ENCODE measurements at regions of chr1 and their contacts with region 1.

Region 1: DNA sequence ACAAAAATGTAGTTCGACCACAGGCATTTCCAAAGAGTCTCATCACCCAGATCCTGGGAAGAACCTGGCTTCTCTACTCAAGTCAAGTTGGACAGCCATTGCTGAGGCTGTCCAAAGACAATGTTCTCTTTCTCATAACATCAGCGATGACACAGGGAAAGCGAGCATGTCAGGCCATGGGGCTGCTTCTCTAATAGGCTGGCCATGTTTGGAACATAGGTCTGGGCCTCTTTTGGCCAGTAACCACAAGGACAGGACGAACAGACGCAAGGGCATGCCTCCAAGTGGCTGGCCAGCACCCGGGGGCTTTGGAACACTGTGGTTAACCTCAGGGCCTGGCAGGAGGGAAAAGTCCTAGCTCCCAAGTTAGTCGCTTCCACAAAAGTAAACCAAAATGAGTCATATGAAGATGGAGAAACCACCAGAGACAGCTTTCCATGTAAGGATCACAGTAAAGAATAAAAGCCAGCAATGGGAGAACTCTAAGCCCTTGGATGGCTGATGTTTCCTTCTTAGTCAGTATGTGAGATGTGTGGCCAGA is 80.6 kb upstream of the SLC44A3 start:
- DNase-seq: no peak
- H3K4me3 ChIP-seq: no peak overlapping the region
- H3K27ac ChIP-seq: peak overlapping the region in 1 of 4 donors; percentile 32
- H3K4me1 ChIP-seq: peaks cover 0 to 34% (median 33%) of the 10 kb centered on the region in 4 donors
- H3K27me3 ChIP-seq: no peaks in the 10 kb centered on the region
- CTCF ChIP-seq: no peak
- EP300 ChIP-seq: no peak
- POLR2A ChIP-seq: no peak

Region 2: DNA sequence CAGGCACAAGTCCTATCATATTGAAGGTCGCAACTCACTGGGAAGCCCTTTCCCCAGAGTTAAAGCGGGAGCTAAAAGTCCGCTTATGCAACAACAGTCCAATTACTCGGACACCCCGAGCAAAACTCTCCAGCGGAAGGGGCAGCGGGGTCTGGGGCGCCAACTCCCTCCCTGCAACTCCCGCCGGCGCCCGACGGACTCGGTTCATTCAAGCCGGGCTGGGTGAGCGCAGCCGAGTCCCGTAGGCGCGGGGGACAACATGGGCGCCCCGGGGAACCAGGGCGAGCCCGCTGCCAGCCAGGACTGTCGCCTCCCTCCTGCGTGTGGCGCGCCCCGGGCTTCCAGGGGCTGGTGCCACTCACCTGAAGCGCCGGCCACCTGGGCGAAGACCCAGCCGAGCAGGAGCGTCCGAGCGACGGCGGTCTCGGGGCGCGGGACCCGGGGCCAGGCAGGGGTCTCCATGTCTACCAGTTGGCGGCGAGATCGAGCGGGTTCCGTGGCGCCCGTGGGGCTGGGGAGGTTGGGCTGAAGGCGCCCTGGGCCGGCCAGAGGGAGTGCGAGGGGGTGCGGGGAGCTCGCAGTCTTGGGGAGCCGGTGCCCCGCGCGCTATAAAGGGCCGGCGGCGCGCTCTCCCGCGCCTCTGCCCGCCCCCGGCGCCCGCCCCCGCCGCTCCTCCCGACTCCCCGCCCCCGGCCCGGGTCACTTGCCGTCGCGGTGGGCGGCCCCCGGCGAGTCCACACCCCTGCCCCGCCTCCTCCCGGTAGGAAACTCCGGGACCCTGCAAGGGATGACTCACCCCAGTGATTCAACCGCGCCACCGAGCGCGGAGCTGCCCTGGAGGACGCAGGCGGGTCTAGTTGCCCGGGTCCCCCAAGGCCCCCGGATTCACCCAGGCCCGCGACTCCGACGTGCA is 198.2 kb before region 1 on chr1 and contains the start of gene F3:
- intact Hi-C with region 1: loop called (anchors 5 kb)
- DNase-seq: peak; percentile 96
- H3K4me3 ChIP-seq: peak within 1 kb of the TSS; percentile 73 to 80 (median 76)
- H3K27ac ChIP-seq: peak within 1 kb of the TSS; percentile 85 to 89 (median 88)
- H3K4me1 ChIP-seq: peaks cover 0 to 35% (median 13%) of the 10 kb centered on the region in 4 donors
- H3K27me3 ChIP-seq: no peaks in the 10 kb centered on the region
- CTCF ChIP-seq: no peak
- EP300 ChIP-seq: no peak
- POLR2A ChIP-seq: peak; percentile 90 to 91
- total RNA-seq, gene F3: 19.3 to 53.7 (median 19.3) TPM

Region 3: DNA sequence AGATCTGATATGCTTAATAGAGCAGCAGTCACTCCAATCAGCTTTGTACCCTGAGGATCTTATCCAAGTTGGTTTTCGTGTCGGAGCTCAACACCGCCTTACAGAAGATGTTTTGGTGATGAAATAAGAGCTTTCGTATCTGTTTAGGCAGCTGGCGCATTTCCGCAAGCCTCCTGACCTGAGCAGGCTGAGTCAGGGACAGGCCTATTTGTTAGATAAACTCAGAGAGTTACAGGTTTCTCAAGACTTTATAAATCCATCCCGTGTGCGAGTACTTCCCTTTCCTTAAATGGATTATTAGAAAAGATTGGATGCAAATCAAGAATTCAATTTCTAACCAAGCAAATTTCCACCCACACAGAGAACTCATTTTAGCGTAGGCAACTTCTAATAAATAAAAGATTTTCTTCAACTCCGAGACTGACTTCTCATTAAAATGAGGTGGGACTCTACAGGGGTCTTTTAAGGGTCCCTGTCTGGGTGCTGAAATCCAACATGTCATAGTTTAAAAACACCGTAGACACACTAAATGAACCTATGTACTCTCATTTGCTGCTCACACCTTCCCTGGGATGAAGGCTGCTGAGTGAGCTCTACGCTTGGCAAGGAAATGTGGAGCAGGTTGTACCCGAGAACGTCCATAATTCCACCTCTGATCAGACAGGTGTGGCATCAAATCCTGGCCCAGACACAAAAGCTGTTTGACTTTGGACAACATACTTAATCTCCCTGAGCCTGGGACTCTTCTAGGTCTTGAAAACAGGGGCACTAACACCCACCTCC is 91.2 kb before region 1 on chr1:
- intact Hi-C with region 1: loop called (anchors 5 kb)
- DNase-seq: peak; percentile 95
- H3K4me3 ChIP-seq: peak overlapping the region in 1 of 4 donors; percentile 1
- H3K27ac ChIP-seq: peak overlapping the region; percentile 61 to 77 (median 69)
- H3K4me1 ChIP-seq: peaks cover 0 to 37% (median 18%) of the 10 kb centered on the region in 4 donors
- H3K27me3 ChIP-seq: no peaks in the 10 kb centered on the region
- CTCF ChIP-seq: no peak
- EP300 ChIP-seq: peak in 3 of 4 donors; percentile 19 to 81 (median 37)
- POLR2A ChIP-seq: no peak

Region 4: DNA sequence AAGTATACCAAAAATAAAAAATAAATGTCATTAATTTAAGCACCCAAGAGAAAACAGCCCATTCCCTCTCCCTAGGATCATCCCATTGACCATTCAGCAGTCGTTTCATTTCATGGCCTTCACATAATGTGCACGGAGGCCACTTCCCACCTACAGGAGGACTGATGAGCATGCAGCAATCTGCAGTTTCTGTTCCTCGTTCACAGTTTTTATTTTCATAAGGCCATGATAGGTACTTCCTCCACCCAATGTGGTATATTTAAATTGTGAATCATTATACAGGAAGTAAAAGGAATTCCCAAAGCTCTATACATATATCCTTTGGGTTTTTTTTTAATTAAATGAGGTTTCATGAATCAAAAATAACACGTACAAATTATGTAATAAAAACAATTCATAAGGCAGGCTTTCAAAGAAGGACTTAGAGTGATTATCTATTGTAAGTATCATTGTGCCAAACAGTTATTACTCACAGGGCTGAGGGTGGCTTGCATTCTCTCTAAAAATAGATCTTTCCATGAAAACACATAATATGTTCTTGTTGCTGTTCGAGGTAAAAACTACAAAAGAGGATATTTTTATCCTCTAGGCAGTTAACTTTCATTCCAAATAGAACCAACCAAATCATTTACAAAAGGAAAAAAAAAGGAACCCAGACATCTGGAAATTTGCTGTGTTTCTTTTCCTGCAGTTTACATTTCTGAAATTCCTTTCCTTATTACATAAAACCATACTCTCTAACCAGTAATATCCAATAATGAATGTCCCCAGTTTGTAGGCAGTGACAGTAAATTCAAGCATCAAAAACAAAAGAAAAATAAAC is 53.1 kb after region 1 on chr1:
- intact Hi-C with region 1: loop called (anchors 2 kb)
- DNase-seq: peak; percentile 68
- H3K4me3 ChIP-seq: no peak overlapping the region
- H3K27ac ChIP-seq: peak overlapping the region; percentile 58 to 83 (median 70)
- H3K4me1 ChIP-seq: peaks cover 0 to 22% (median 21%) of the 10 kb centered on the region in 4 donors
- H3K27me3 ChIP-seq: no peaks in the 10 kb centered on the region
- CTCF ChIP-seq: peak; percentile 23 to 57 (median 37)
- EP300 ChIP-seq: no peak
- POLR2A ChIP-seq: no peak